ENCODE measurements at regions of chr10 and their contacts with region 1.

Region 1: GRCh38 chr10:49518982-49519578 is 19.8 kb downstream of the ERCC6 start:
- DNase-seq: peak; percentile 62
- H3K4me3 ChIP-seq: no peak overlapping the region
- H3K27ac ChIP-seq: no peak overlapping the region
- H3K4me1 ChIP-seq: no peaks in the 10 kb centered on the region
- H3K27me3 ChIP-seq: no peaks in the 10 kb centered on the region
- CTCF ChIP-seq: peak; percentile 42 to 59
- POLR2A ChIP-seq: no peak

Region 2: DNA sequence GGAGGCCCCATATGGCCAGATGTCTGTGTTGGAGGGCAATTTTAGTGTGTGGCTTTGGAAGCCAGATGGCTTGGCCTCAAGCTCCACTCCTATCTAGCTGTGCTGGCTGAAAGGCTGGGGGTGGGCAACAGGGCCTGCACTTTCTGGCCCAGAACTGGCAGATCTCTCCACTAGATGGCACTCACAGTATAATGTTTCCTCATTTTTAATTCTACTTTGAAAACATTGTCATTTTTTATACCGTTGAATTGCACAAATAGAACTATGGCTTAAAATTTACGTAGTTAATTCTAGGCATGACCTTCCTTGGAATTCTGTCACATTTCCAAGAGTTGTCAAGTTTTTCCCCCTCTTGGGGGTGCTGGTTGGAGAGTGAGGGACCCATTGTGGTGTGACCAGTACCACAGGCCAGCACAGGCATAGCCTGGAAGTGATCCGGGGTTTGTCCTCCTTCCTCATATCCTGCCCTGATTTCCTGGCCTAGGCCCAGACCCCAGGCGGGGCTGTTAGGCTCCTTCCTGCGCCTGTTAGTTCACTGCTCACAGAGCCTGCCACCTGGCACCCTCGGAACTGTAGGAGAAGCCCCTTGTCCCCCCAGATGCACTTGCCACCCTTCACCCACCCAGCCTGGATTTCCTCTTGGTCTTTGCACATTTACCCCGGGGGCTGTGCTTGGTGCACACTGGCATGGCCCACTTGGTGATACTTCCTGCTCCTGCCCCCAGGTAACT is 967.1 kb before region 1 on chr10:
- CTCF ChIA-PET with region 1: no interaction called
- POLR2A ChIA-PET with region 1: no interaction called
- dilution Hi-C with region 1: no loop called
- intact Hi-C with region 1: loop called (anchors 10 kb)
- DNase-seq: peak; percentile 68
- H3K4me3 ChIP-seq: no peak overlapping the region
- H3K27ac ChIP-seq: peak overlapping the region; percentile 45
- H3K4me1 ChIP-seq: peaks cover 37% of the 10 kb centered on the region
- H3K27me3 ChIP-seq: no peaks in the 10 kb centered on the region
- CTCF ChIP-seq: peak; percentile 66 to 77
- POLR2A ChIP-seq: no peak

Region 3: DNA sequence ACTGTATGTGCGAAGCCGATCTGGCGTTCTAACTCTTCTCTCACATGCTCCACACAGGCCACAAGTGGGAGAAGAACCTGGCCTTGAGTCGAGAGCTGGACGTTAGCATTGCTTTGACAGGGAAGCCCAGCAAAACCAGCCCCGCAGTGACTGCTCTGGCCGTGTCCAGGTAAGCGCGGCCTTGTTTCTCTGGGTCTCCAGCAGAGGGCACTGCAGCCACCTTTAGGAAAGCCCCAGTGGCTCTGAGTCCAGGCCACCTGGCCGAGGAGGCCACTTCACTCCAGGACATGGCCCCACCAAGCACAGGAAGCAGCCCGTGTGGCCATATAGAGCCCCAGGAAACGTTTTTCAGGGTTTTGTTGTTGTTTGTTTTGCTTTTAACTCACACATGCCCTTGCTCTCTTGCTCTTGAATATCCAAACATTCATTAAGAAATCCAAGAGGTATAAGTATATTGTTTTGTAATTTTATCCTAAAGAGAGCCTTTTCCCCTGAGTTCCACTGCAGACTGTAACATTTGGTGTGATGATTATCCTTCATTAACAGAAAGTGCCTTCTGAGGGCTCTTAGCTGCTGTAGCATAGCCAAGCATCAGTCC is 537.7 kb before region 1 on chr10:
- CTCF ChIA-PET with region 1: no interaction called
- POLR2A ChIA-PET with region 1: no interaction called
- dilution Hi-C with region 1: no loop called
- intact Hi-C with region 1: loop called (anchors 2 kb)
- DNase-seq: peak; percentile 27
- H3K4me3 ChIP-seq: no peak overlapping the region
- H3K27ac ChIP-seq: no peak overlapping the region
- H3K4me1 ChIP-seq: no peaks in the 10 kb centered on the region
- H3K27me3 ChIP-seq: no peaks in the 10 kb centered on the region
- CTCF ChIP-seq: peak; percentile 72 to 88
- POLR2A ChIP-seq: no peak

Region 4: DNA sequence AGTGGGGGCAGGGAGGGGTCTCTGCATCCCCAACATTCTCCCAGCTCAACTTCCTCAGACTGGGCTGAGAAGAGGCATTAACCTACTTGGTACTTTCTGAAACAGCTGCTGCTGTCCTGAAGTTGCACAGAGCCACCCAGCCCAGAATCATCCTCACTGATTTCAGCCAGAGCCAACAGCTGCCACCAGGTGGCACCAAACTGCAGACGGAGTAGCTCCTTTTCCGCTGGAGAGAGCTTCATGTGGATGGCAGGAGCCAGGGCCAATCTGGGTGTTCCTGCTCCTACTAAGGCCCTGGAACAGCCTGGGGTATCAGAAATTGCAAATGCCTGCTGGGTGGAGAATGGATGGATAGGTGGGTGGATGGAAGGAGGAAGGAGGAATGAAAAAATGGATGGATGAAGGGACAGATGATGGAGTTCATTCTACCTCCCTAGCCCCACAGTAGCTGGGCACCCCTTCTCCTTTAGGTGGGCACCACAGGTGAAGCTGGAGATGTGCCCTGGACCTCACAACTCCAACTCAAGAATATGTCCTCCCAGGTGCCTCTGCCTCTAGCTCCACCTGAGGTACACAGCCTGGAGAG is 111.4 kb before region 1 on chr10:
- CTCF ChIA-PET with region 1: interaction called, 109 read pairs
- POLR2A ChIA-PET with region 1: no interaction called
- dilution Hi-C with region 1: no loop called
- intact Hi-C with region 1: loop called (anchors 1 kb)
- DNase-seq: peak; percentile 62
- H3K4me3 ChIP-seq: no peak overlapping the region
- H3K27ac ChIP-seq: no peak overlapping the region
- H3K4me1 ChIP-seq: no peaks in the 10 kb centered on the region
- H3K27me3 ChIP-seq: peaks cover 2 to 10% of the 10 kb centered on the region in 2 experiments
- CTCF ChIP-seq: peak; percentile 90 to 91
- POLR2A ChIP-seq: no peak

Region 5: GRCh38 chr10:49500418-49500817 is 18.7 kb before region 1 on chr10:
- CTCF ChIA-PET with region 1: interaction called, 14 read pairs
- POLR2A ChIA-PET with region 1: no interaction called
- dilution Hi-C with region 1: no loop called
- intact Hi-C with region 1: no loop called
- DNase-seq: no peak
- H3K4me3 ChIP-seq: no peak overlapping the region
- H3K27ac ChIP-seq: no peak overlapping the region
- H3K4me1 ChIP-seq: no peaks in the 10 kb centered on the region
- H3K27me3 ChIP-seq: no peaks in the 10 kb centered on the region
- CTCF ChIP-seq: no peak
- POLR2A ChIP-seq: no peak

Region 6: DNA sequence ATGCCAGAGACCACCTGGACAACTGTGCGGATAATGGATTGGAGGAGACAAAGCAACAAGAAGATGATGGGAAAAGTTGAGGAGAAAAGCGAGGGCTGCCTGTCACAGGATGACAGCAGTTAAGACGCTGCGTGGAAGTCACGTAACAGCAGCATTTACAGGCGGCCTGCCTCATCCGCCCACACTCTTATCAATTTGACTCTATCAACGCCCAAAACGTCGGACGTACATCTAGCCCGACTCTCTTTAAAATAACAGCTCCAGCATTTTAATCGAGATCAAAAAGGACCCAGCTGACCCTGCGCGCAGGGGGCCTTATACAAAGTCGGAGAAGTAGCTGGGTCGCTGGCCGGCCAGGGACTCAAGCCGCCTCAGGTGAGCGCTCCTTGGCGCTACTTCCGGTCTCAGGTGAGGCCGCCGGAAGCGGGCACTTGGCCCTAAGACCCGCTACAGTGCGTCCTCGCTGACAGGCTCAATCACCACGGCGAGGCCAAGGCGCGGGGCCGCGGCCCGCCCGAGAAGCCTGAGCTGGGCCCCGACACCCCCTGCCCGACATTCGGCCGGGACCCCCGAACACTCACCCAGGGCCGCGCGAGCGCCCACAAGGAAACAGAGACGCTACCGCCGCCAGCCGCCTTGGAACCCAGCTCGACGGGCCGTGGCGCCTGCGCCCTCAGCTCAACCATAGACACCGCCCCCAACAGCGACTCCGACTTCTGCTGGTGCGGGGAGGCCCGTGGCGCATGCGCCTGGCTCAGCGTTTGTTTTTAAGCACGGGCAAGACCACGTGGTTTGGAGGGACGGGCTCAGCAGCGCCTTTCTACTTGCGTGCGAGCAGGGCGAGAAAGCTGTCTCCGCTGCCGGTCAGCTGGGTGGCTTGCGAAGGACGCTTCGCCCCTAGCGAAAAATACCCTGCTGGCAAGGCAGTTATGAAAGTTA is 19.6 kb after region 1 on chr10 and contains the start of gene ERCC6:
- CTCF ChIA-PET with region 1: interaction called, 14 read pairs
- POLR2A ChIA-PET with region 1: interaction called, 5 read pairs
- dilution Hi-C with region 1: no loop called
- intact Hi-C with region 1: no loop called
- DNase-seq: peak; percentile 99
- H3K4me3 ChIP-seq: peak within 1 kb of the TSS; percentile 17 to 85 (median 70)
- H3K27ac ChIP-seq: peak within 1 kb of the TSS; percentile 84
- H3K4me1 ChIP-seq: peaks cover 45% of the 10 kb centered on the region
- H3K27me3 ChIP-seq: no peaks in the 10 kb centered on the region
- CTCF ChIP-seq: no peak
- POLR2A ChIP-seq: peak; percentile 39
- total RNA-seq, gene ERCC6: 39.6 and 59.6 TPM in 2 replicates

Region 7: GRCh38 chr10:49552249-49552672 is 33.2 kb after region 1 on chr10:
- CTCF ChIA-PET with region 1: interaction called, 14 read pairs
- POLR2A ChIA-PET with region 1: no interaction called
- dilution Hi-C with region 1: no loop called
- intact Hi-C with region 1: no loop called
- DNase-seq: peak; percentile 83
- H3K4me3 ChIP-seq: peak overlapping the region in 1 of 3 experiments; percentile 32
- H3K27ac ChIP-seq: peak overlapping the region; percentile 99
- H3K4me1 ChIP-seq: peaks cover 42% of the 10 kb centered on the region
- H3K27me3 ChIP-seq: no peaks in the 10 kb centered on the region
- CTCF ChIP-seq: no peak
- POLR2A ChIP-seq: no peak

Measured in endothelial cell of umbilical vein (primary cell).